A673 (cell line): ENCODE measurements at regions of chr11 and their contacts with region 1.

Region 1: GRCh38 chr11:36009473-36009872 is 65.6 kb downstream of the LDLRAD3 start:
- DNase-seq: peak; percentile 76
- H3K4me3 ChIP-seq: no peak overlapping the region
- H3K27ac ChIP-seq: no peak overlapping the region
- H3K4me1 ChIP-seq: peaks cover 15% of the 10 kb centered on the region
- H3K27me3 ChIP-seq: no peaks in the 10 kb centered on the region
- CTCF ChIP-seq: no peak

Region 2: GRCh38 chr11:36062796-36063365 is 53.4 kb after region 1 on chr11:
- CTCF ChIA-PET with region 1: no interaction called
- POLR2A ChIA-PET with region 1: no interaction called
- intact Hi-C with region 1: loop called (anchors 5 kb)
- DNase-seq: no peak
- H3K4me3 ChIP-seq: no peak overlapping the region
- H3K27ac ChIP-seq: no peak overlapping the region
- H3K4me1 ChIP-seq: no peaks in the 10 kb centered on the region
- H3K27me3 ChIP-seq: no peaks in the 10 kb centered on the region
- CTCF ChIP-seq: no peak